BJ (cell line): ENCODE measurements at regions of chr10 and their contacts with region 1.

Region 1: GRCh38 chr10:91632671-91633550 is at the start of gene PPP1R3C:
- DNase-seq: peak; percentile 68
- H3K4me3 ChIP-seq: peak within 1 kb of the TSS; percentile 74
- H3K27me3 ChIP-seq: no peaks in the 10 kb centered on the region
- CTCF ChIP-seq: peak; percentile 55
- polyA plus RNA-seq, gene PPP1R3C: 33.4 and 53.4 TPM in 2 replicates

Region 2: DNA sequence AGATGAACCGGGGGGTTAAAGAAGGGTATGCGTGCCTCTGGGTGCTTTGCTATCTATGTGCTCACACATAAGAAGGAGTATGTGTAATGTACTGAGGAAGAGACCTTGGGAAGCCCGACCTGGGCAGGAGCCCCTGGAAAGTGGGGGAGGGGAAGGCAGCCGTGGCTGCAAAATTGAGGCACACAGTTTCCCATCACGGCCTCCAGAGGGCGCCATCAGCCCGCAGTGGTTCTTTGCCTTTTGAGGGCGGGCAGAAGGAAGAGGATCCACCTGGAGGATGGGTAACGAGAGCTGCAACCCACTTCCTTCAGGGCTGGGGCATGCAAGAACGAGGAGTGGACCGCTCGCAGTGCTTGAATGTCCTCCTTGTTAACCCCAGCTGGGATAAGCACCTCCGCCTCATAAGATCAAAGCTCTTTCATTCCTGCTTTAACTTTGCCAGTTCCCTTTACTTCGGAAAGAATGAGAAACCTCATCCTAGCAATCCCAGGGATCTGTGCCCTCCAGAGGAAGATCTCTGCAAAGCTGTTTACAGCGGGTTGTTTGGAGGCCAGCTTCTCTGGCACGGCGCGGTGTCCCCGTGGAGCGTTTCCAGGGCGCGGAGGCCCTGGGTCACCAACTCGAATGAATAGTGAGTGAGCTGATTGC is 334.6 kb before region 1 on chr10:
- CTCF ChIA-PET with region 1: interaction called, 26 read pairs
- POLR2A ChIA-PET with region 1: no interaction called
- DNase-seq: no peak
- H3K4me3 ChIP-seq: peak overlapping the region; percentile 30
- H3K27me3 ChIP-seq: no peaks in the 10 kb centered on the region
- CTCF ChIP-seq: peak; percentile 95

Region 3: DNA sequence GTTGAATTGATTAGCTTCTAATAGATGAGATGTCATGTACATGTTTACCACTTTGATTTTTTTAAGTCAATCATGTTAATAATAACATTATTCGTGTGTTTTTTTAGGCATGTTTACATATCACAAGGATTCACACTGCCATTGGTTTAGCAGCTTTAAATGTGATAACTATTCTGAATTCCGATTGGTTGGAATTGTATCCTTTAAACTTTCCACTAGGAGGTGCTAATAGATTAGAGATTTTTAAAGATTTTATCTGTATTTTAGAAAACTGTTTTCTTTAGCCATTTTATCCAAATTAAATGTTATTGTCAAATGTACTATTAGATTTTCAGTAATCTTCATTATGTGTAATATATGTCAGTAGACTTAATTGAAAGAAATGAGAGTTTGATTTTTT is 139.6 kb before region 1 on chr10:
- CTCF ChIA-PET with region 1: interaction called, 116 read pairs
- POLR2A ChIA-PET with region 1: interaction called, 3 read pairs
- DNase-seq: no peak
- H3K4me3 ChIP-seq: no peak overlapping the region
- H3K27me3 ChIP-seq: no peaks in the 10 kb centered on the region
- CTCF ChIP-seq: peak; percentile 37

Region 4: DNA sequence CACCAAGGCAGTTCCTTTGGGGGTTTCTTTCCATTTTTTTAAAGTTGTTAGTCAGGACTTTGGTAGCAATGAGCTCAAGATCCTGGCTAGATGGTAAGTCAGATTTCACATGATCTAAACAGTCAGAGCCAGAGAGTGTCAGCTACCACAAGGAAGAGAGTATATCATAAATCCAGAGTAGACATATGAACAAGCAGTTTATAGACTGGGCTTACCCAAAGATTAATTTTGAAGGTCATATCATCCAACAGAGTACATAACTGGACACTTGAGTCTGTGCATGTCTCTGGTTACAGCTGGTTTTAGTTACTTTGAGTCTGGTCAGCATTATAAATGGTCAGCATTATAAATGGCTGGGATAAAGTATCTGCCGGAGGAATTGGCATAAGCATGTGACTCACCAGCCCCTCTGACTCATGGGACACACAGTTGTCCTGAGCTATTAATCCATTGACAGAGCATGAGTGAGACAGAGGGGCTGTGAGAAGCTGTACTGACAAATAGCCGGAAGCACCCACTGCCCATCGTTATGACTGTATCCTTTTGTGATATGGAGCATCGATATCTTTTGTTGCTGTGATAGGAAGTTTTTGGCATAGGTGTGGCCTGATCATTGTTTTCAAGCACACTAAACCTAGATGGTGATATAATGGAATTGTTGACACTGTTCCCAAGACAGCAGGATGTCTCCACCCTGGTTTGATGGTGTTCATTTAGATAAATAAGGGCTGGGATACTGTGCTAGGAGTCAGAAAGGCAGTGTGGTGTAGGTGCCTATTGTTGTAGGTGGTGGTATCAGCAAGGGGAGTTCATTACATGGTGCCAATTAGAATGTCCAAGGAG is 19.3 kb before region 1 on chr10:
- CTCF ChIA-PET with region 1: interaction called, 11 read pairs
- POLR2A ChIA-PET with region 1: interaction called, 3 read pairs
- DNase-seq: peak; percentile 99
- H3K4me3 ChIP-seq: no peak overlapping the region
- H3K27me3 ChIP-seq: no peaks in the 10 kb centered on the region
- CTCF ChIP-seq: no peak

Region 5: DNA sequence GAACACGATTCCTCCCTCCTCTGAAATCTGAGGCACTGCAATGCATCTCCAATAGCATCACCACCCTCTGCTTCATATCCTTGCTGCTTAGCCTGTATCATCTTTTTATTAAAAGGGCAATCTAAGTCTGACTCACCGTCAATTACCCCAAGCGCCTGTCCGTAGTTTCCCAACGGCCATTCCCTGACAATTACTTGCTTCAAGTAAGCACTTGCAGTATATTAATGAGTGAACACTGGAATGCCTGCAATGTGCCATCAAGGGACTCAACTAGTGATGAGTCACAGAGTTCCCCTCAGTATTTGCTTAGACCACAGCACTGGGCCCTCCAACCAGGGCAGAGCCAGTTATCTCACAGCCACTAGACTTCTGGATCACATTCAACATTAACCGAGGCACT is 19.5 kb after region 1 on chr10:
- CTCF ChIA-PET with region 1: interaction called, 15 read pairs
- POLR2A ChIA-PET with region 1: interaction called, 5 read pairs
- DNase-seq: peak; percentile 97
- H3K4me3 ChIP-seq: no peak overlapping the region
- H3K27me3 ChIP-seq: no peaks in the 10 kb centered on the region
- CTCF ChIP-seq: no peak